Right ventricle myocardium inferior (tissue), 1 donor: ENCODE measurements at regions of chrX and their contacts with region 1.

Region 1: DNA sequence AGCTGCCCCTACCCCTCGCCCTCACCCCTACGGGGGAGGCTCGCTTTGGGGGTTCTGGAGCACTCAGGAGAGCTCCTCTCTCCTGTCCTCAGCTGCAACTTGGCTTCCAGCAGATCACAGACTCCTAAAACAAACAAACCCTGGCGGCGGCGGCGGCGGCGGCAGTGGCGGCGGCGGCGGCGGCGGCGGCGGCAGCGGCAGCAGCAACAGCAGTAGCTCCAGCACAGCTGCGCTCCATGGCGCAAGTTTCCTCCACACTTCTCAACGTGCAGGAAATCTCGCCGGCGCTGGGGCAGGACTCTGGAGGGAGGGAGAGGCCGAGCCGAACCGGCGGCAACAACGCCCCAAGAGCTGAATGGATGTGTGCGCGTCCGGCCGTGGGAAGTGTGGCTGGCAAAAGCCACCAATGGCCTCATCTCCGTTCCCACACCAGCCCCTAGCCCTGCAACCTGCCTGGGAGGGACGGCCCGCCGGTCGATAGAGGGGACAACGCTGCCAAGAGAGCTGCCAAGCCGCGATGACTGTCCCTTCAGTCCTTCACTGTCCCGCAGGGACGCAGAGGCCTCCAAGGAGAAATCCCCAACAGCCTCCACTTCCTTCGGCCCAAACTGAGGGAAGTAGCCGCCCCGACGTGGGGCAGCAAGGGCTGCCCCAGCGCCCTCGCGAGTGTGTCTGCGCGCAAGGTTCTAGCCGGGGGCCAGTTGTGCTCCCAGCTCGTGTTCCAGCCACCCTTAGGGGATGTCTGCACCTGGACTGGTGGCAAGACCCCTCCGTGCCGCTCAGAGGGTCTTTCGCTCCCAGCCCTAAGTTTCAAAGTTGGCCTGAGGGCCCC is 783 bp downstream of the SHROOM4 start:
- DNase-seq: peak; percentile 69
- ATAC-seq: peak; percentile 75

Region 2: DNA sequence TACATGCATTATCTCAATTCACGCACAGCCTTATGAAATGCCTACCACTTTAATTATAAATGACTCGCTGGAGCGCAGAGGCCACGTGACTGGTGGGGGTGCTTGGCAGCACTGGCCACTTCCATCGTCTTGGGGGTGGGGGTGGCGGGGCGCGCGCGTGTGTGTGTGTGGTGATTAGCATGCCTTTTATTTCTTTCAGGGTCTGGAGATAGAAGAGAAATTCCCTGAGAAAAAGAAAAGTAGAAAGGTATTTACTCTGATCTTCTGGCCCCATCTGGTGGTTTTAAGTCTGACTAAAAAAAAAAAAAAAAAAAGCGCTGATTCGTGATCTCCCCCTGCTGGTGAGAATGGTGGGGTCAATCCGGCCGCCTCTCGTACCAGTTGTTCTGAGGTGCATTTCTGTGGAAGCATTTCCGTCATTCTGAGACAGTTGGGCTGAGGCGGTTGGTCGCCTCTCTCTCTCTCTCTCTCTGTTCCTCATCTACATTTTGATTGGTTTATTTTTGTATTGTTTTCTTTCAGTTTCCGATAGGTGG is 608.8 kb before region 1 on chrX and contains the start of gene CCNB3:
- intact Hi-C with region 1: no loop called
- DNase-seq: peak; percentile 82
- ATAC-seq: peak; percentile 86
- total RNA-seq, gene CCNB3: 0.41 TPM

Region 3: DNA sequence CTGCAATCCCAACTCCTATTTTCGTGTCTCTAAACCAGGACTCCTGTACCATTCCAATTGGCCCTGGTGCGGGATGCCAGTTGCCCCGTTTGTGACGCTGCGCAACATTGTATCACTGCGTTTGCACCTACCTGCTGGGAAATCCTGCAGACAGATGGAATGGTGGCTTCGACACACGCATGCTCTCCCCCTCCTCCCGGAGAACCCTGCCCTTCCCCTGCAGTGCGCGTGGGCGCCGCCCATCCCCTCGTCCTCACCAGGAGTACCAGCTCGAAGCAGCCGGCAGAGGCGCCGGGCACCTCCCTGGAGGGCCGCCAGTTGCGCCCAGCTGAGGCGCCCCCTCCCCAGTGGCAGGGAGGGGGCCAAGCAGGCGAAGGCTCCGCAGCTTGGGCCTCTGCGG is 344.0 kb before region 1 on chrX:
- intact Hi-C with region 1: no loop called
- DNase-seq: no peak
- ATAC-seq: no peak

Region 4: GRCh38 chrX:50747471-50747900 is 65.7 kb before region 1 on chrX:
- intact Hi-C with region 1: loop called (anchors 10 kb)
- DNase-seq: no peak
- ATAC-seq: no peak